PC-9 (cell line): ENCODE measurements at regions of chr20 and their contacts with region 1.

Region 1: DNA sequence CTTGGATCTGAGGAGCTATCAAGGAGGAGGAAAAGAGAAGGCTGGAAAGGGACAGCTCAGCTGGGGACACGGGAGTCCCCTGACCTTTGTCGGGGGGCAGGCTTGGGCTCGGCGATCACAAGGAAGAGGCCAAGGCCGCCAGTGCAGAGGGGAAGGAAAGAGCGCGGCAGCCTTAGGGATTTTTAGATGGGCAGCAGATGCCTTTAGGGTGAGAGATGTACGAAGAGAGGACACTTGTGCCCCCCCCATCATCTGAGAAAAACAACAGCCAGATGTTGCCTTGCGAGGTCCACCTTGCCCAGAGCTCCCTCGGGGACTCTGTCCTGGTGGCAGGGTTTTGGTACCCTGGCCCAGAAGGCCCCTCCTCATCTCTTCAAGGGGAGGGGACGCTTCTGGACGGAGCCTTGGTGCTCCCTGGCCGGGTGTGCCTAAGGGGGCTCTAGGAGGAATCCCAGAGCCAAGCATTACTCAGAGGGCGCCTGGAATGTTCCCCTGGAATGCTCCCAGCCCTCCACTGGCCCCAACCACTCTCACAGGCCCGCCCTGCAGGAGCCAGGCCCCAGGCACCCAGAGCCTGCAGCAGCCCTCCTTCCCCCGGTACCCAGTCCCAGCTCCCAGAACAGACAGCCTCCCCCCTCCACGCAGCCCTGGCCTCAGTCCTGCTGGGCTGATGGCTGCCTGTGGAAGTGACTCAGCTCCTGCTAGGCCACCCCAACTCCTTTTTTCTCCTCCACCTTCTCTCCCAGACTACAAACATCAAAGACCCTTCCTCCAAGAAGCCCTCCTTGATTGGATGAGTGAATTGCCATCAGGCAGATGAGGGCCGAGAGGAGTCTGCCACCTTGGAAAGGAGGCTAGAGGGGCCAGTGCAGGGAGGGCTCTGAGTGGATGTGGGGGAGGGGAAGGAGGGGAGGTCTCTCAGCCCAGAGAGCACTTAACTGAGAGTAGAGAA is 1.8 kb downstream of the ADAM33 start:
- DNase-seq: no peak
- H3K4me3 ChIP-seq: no peak overlapping the region
- H3K27ac ChIP-seq: no peak overlapping the region
- H3K4me1 ChIP-seq: no peaks in the 10 kb centered on the region
- H3K27me3 ChIP-seq: peaks cover 20% of the 10 kb centered on the region
- CTCF ChIP-seq: no peak

Region 2: GRCh38 chr20:3250091-3250504 is 429.9 kb before region 1 on chr20:
- CTCF ChIA-PET with region 1: interaction called, 17 read pairs
- POLR2A ChIA-PET with region 1: no interaction called
- intact Hi-C with region 1: no loop called
- DNase-seq: peak in 1 of 2 experiments; percentile 34
- H3K4me3 ChIP-seq: no peak overlapping the region
- H3K27ac ChIP-seq: no peak overlapping the region
- H3K4me1 ChIP-seq: no peaks in the 10 kb centered on the region
- H3K27me3 ChIP-seq: no peaks in the 10 kb centered on the region
- CTCF ChIP-seq: peak; percentile 61

Region 3: GRCh38 chr20:3580412-3580811 is 99.6 kb before region 1 on chr20:
- CTCF ChIA-PET with region 1: no interaction called
- POLR2A ChIA-PET with region 1: no interaction called
- intact Hi-C with region 1: no loop called
- DNase-seq: no peak
- H3K4me3 ChIP-seq: no peak overlapping the region
- H3K27ac ChIP-seq: no peak overlapping the region
- H3K4me1 ChIP-seq: no peaks in the 10 kb centered on the region
- H3K27me3 ChIP-seq: no peaks in the 10 kb centered on the region
- CTCF ChIP-seq: no peak

Region 4: DNA sequence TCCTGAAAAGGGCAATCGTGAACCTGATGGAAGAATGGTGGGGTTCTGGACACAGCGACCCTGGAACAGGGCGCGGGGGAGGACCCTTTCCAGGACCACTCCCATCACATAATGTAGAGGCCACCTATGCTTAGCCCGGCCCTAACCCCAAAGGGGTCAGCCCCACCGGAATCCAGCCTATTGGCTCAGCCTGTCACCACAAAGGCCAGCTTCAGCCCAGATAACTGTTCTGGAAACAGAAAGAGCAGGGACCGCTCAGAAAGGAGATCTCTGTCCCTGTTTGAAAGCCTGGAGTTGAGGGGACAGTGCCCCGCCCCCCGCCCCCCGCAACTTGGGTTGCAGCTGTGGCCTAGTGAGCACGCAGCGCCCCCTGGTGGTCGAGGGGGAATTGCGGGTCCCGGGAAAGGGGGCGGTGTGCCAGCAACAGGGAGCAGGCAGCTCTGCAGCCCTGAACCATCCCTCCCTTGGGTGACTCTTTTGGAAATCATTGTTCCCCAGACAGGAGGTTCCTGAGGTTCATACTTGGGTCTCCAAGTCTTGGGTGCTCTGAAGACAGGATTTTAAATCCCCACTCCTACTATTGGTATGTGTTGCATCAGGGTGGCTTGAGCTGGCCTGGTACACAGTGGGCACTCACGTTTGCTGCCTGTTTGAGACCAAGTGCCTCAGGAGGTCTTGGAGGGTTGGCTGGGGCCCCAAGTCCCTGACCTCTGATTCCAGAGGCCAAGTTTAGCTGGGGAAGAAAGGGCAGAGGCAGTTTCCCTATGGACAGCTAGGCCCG is 30.9 kb after region 1 on chr20:
- CTCF ChIA-PET with region 1: interaction called, 22 read pairs
- POLR2A ChIA-PET with region 1: no interaction called
- intact Hi-C with region 1: loop called (anchors 1 kb)
- DNase-seq: peak in 1 of 2 experiments; percentile 70
- H3K4me3 ChIP-seq: no peak overlapping the region
- H3K27ac ChIP-seq: no peak overlapping the region
- H3K4me1 ChIP-seq: no peaks in the 10 kb centered on the region
- H3K27me3 ChIP-seq: no peaks in the 10 kb centered on the region
- CTCF ChIP-seq: peak; percentile 96

Region 5: GRCh38 chr20:3781153-3781910 is 101.3 kb after region 1 on chr20 and contains the start of gene SPEF1:
- CTCF ChIA-PET with region 1: interaction called, 6 read pairs
- POLR2A ChIA-PET with region 1: no interaction called
- intact Hi-C with region 1: loop called (anchors 5 kb)
- DNase-seq: peak; percentile 85 to 94
- H3K4me3 ChIP-seq: peak within 1 kb of the TSS; percentile 65
- H3K27ac ChIP-seq: no peak within 1 kb of the TSS
- H3K4me1 ChIP-seq: peaks cover 34% of the 10 kb centered on the region
- H3K27me3 ChIP-seq: no peaks in the 10 kb centered on the region
- CTCF ChIP-seq: peak; percentile 75
- total RNA-seq, gene SPEF1: 2.6 and 2.7 TPM in 2 replicates

Region 6: GRCh38 chr20:3820048-3820900 is 140.2 kb after region 1 on chr20 and contains the start of gene AP5S1:
- CTCF ChIA-PET with region 1: no interaction called
- POLR2A ChIA-PET with region 1: no interaction called
- intact Hi-C with region 1: loop called (anchors 1 kb)
- DNase-seq: peak; percentile 86 to 95
- H3K4me3 ChIP-seq: peak within 1 kb of the TSS; percentile 66
- H3K27ac ChIP-seq: peak within 1 kb of the TSS; percentile 85
- H3K4me1 ChIP-seq: peaks cover 6% of the 10 kb centered on the region; the same call in 1 of the 2 replicates
- H3K27me3 ChIP-seq: no peaks in the 10 kb centered on the region
- CTCF ChIP-seq: peak; percentile 96
- total RNA-seq, gene AP5S1: 18.3 and 20.0 TPM in 2 replicates

Region 7: DNA sequence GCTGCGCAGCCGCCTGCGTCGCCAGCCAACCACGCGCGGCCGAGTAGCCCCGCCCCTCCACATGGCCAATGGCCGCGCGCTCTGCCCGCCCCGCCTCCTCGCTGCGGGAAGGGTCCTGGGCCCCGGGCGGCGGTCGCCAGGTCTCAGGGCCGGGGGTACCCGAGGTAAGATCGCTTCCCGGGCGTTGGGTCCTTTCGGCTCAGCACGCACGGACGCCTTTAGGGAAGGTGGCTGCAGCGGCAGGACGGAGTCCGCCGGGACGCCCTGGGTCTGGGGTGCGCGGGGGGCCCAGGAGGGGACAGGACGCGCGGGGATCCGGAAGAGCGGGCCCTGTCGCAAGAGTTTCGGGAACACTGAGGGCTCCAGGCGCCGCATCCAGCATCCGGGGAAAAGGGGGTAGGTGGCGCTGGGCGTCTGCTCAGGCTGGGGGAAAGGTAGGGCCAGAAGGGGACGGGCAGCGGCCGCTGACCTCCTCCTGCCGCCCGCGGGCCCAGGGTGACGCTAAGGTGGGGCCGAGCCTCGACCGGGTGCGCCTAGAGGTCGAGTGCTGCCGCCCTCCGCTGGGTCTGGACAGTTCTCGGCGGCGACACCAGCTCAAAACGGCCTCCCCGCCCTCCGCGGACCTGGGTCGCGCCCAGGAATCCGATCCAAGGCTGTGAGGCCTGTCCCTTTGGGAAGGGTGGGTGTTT is 166.9 kb after region 1 on chr20 and contains the start of gene MAVS:
- CTCF ChIA-PET with region 1: interaction called, 18 read pairs
- POLR2A ChIA-PET with region 1: no interaction called
- intact Hi-C with region 1: no loop called
- DNase-seq: peak; percentile 66 to 91
- H3K4me3 ChIP-seq: peak within 1 kb of the TSS; percentile 100
- H3K27ac ChIP-seq: peak within 1 kb of the TSS; percentile 88
- H3K4me1 ChIP-seq: peaks cover 54% of the 10 kb centered on the region
- H3K27me3 ChIP-seq: no peaks in the 10 kb centered on the region
- CTCF ChIP-seq: no peak
- total RNA-seq, gene MAVS: 53.6 and 61.3 TPM in 2 replicates

Region 8: GRCh38 chr20:4091490-4092479 is 411.8 kb after region 1 on chr20:
- CTCF ChIA-PET with region 1: no interaction called
- POLR2A ChIA-PET with region 1: no interaction called
- intact Hi-C with region 1: loop called (anchors 5 kb)
- DNase-seq: peak; percentile 35 to 72
- H3K4me3 ChIP-seq: no peak overlapping the region
- H3K27ac ChIP-seq: no peak overlapping the region
- H3K4me1 ChIP-seq: no peaks in the 10 kb centered on the region
- H3K27me3 ChIP-seq: no peaks in the 10 kb centered on the region
- CTCF ChIP-seq: peak; percentile 75